Mammary epithelial cell (primary cell): ENCODE measurements at regions of chr10 and their contacts with region 1.

Region 1: GRCh38 chr10:72069751-72070526 is 18.4 kb downstream of the SPOCK2 start:
- DNase-seq: no peak
- H3K4me3 ChIP-seq: no peak overlapping the region
- H3K27ac ChIP-seq: no peak overlapping the region
- H3K4me1 ChIP-seq: no peaks in the 10 kb centered on the region
- H3K27me3 ChIP-seq: no peaks in the 10 kb centered on the region
- CTCF ChIP-seq: peak in 1 of 2 donors; percentile 30

Region 2: GRCh38 chr10:71985542-71986250 is 84.2 kb before region 1 on chr10:
- CTCF ChIA-PET with region 1: no interaction called
- dilution Hi-C with region 1: loop called (anchors 5 kb)
- in situ Hi-C with region 1: no loop called
- intact Hi-C with region 1: no loop called
- DNase-seq: no peak
- H3K4me3 ChIP-seq: no peak overlapping the region
- H3K27ac ChIP-seq: no peak overlapping the region
- H3K4me1 ChIP-seq: peaks cover 33% of the 10 kb centered on the region
- H3K27me3 ChIP-seq: no peaks in the 10 kb centered on the region
- CTCF ChIP-seq: no peak

Region 3: GRCh38 chr10:72104472-72105097 is 34.6 kb after region 1 on chr10:
- CTCF ChIA-PET with region 1: no interaction called
- dilution Hi-C with region 1: loop called (anchors 5 kb)
- in situ Hi-C with region 1: no loop called
- intact Hi-C with region 1: no loop called
- DNase-seq: no peak
- H3K4me3 ChIP-seq: no peak overlapping the region
- H3K27ac ChIP-seq: no peak overlapping the region
- H3K4me1 ChIP-seq: peaks cover 22% of the 10 kb centered on the region
- H3K27me3 ChIP-seq: no peaks in the 10 kb centered on the region
- CTCF ChIP-seq: no peak